ENCODE measurements at regions of chr3 and their contacts with region 1.

Region 1: GRCh38 chr3:129249276-129250065 is at the start of gene COPG1:
- DNase-seq: peak; percentile 75
- ATAC-seq: peak; percentile 88
- H3K4me3 ChIP-seq: peak within 1 kb of the TSS; percentile 95 to 97
- H3K27ac ChIP-seq: peak within 1 kb of the TSS; percentile 62
- H3K4me1 ChIP-seq: peaks cover 7 to 23% of the 10 kb centered on the region in 2 experiments; a peak in 3 of 4 replicates
- H3K27me3 ChIP-seq: no peaks in the 10 kb centered on the region
- CTCF ChIP-seq: no peak
- POLR2A ChIP-seq: peak; percentile 66
- RAD21 ChIP-seq: no peak
- total RNA-seq, gene COPG1: 182 TPM

Region 2: GRCh38 chr3:128969993-128970739 is 279.3 kb before region 1 on chr3:
- CTCF ChIA-PET with region 1: interaction called, 55 read pairs
- POLR2A ChIA-PET with region 1: no interaction called
- RAD21 ChIA-PET with region 1: interaction called, 3 to 10 read pairs
- intact Hi-C with region 1: loop called (anchors 1 kb)
- DNase-seq: peak; percentile 15
- ATAC-seq: peak; percentile 74
- H3K4me3 ChIP-seq: no peak overlapping the region
- H3K27ac ChIP-seq: no peak overlapping the region
- H3K4me1 ChIP-seq: 0 out of 4 replicates have a peak, but pooled peaks cover 0 to 3% of the 10 kb centered on the region in 2 experiments
- H3K27me3 ChIP-seq: no peaks in the 10 kb centered on the region
- CTCF ChIP-seq: peak; percentile 89 to 94 (median 91)
- POLR2A ChIP-seq: no peak
- RAD21 ChIP-seq: peak; percentile 89

Region 3: GRCh38 chr3:129026728-129027543 is 222.5 kb before region 1 on chr3:
- CTCF ChIA-PET with region 1: interaction called, 5 read pairs
- POLR2A ChIA-PET with region 1: no interaction called
- RAD21 ChIA-PET with region 1: no interaction called
- intact Hi-C with region 1: loop called (anchors 10 kb)
- DNase-seq: peak; percentile 87
- ATAC-seq: peak; percentile 100
- H3K4me3 ChIP-seq: peak overlapping the region; percentile 45 to 64
- H3K27ac ChIP-seq: peak overlapping the region; percentile 30; the same call in 1 of the 2 replicates
- H3K4me1 ChIP-seq: peaks cover 6 to 19% of the 10 kb centered on the region in 2 experiments
- H3K27me3 ChIP-seq: no peaks in the 10 kb centered on the region
- CTCF ChIP-seq: peak in 2 of 3 experiments; percentile 63 to 74; a peak in 5 of 6 replicates
- POLR2A ChIP-seq: peak; percentile 56
- RAD21 ChIP-seq: no peak

Region 4: GRCh38 chr3:129160891-129161859 is 88.3 kb before region 1 on chr3 and contains the start of gene ISY1:
- CTCF ChIA-PET with region 1: interaction called, 49 read pairs
- POLR2A ChIA-PET with region 1: interaction called, 7 read pairs
- RAD21 ChIA-PET with region 1: interaction called in 1 of 2 experiments, 4 read pairs
- intact Hi-C with region 1: loop called (anchors 1 kb)
- DNase-seq: peak; percentile 97
- ATAC-seq: peak; percentile 85
- H3K4me3 ChIP-seq: peak within 1 kb of the TSS; percentile 79 to 95
- H3K27ac ChIP-seq: peak within 1 kb of the TSS; percentile 85
- H3K4me1 ChIP-seq: peaks cover 10 to 22% of the 10 kb centered on the region in 2 experiments; a peak in 3 of 4 replicates
- H3K27me3 ChIP-seq: no peaks in the 10 kb centered on the region
- CTCF ChIP-seq: peak; percentile 83 to 89 (median 86)
- POLR2A ChIP-seq: peak; percentile 80
- RAD21 ChIP-seq: peak; percentile 53; the same call in 1 of the 2 replicates
- total RNA-seq, gene ISY1: 43.6 TPM

Region 5: GRCh38 chr3:129224984-129225393 is 24.5 kb before region 1 on chr3:
- CTCF ChIA-PET with region 1: interaction called, 13 read pairs
- POLR2A ChIA-PET with region 1: interaction called, 3 read pairs
- RAD21 ChIA-PET with region 1: interaction called, 3 to 4 read pairs
- intact Hi-C with region 1: no loop called
- DNase-seq: no peak
- ATAC-seq: peak; percentile 61
- H3K4me3 ChIP-seq: peak overlapping the region in 1 of 2 experiments; percentile 17; a peak in 1 of 4 replicates
- H3K27ac ChIP-seq: peak overlapping the region; percentile 44
- H3K4me1 ChIP-seq: peaks cover 29 to 52% of the 10 kb centered on the region in 2 experiments
- H3K27me3 ChIP-seq: no peaks in the 10 kb centered on the region
- CTCF ChIP-seq: no peak
- POLR2A ChIP-seq: no peak
- RAD21 ChIP-seq: no peak